IMR-90 (cell line): ENCODE measurements at regions of chr14 and their contacts with region 1.

Region 1: DNA sequence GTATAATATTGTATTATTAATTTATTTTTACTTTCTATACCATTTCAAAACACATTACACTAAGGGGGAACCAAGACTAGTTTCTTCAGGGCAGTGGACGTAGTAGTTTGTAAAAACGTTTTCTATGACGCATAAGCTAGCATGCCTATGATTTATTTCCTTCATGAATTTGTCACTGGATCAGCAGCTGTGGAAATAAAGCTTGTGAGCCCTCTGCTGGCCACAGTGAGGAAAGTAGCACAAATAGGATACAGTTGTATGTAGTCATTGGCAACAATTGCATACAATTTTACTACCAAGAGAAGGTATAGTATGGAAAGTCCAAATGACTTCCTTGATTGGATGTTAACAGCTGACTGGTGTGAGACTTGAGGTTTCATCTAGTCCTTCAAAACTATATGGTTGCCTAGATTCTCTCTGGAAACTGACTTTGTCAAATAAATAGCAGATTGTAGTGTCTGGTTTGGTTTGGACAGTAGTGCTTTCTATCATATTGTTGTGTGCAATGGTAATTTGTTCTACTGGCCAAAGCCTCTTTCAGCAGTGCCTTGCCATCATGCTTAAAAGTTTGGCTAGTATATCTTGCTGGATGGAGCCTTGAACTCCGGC is 24.3 kb upstream of the PLEKHD1 start:
- DNase-seq: peak; percentile 95
- ATAC-seq: peak; percentile 75
- H3K4me3 ChIP-seq: no peak overlapping the region
- H3K27ac ChIP-seq: no peak overlapping the region
- H3K4me1 ChIP-seq: 0 out of 2 replicates have a peak, but pooled peaks cover 2% of the 10 kb centered on the region
- H3K27me3 ChIP-seq: no peaks in the 10 kb centered on the region
- CTCF ChIP-seq: peak; percentile 86
- POLR2A ChIP-seq: no peak
- RAD21 ChIP-seq: peak; percentile 84

Region 2: DNA sequence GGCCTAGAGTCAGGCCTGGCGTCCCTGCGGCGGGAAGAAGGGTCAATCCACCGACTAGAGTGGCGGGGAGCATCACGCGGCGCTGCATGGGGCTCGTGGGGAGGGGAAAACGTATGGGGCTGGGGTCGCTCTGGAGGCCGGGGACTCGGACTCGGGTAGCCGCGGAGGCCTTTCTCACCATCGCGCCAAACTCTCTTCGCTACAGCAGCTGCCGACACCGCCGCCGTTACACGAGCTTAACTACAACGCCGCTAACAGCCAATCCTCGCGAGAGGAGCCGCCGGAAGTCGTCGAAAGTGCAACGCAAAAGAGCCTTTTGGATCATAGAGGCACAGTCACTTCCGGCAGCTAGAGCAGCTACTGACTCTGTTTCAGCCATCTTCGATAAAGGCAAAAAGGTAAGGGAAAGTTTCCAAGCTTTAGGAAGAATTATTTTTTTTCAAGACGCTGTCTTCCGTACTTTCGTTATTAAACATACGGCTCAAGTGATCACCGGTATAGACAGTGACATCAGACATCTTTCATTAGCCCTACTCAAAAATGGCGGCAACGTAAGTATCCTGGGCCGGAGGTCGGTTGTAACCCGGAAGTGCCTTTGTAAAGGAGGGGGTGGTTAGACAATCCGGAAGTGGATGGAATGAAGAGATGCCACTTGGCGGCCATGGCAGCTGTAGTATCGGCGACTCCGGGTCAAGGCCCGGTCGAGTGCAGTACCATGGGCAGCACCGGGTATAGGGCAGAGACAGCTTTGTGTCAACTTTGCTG is 62.0 kb before region 1 on chr14 and contains the starts of genes ERH and SLC39A9:
- CTCF ChIA-PET with region 1: interaction called, 3 read pairs
- POLR2A ChIA-PET with region 1: no interaction called
- dilution Hi-C with region 1: no loop called
- in situ Hi-C with region 1: no loop called
- intact Hi-C with region 1: loop called (anchors 1 kb)
- DNase-seq: peak; percentile 97
- ATAC-seq: peak; percentile 93
- H3K4me3 ChIP-seq: peak within 1 kb of the TSS; percentile 57
- H3K27ac ChIP-seq: peak within 1 kb of the TSS; percentile 94
- H3K4me1 ChIP-seq: peaks cover 1% of the 10 kb centered on the region; the same call in 1 of the 2 replicates
- H3K27me3 ChIP-seq: no peaks in the 10 kb centered on the region
- CTCF ChIP-seq: 0 out of 2 replicates have a peak, but pooled peaks have one; percentile 0
- POLR2A ChIP-seq: peak; percentile 93
- RAD21 ChIP-seq: no peak; the same call in 1 of the 2 replicates
- total RNA-seq, gene ERH: 64.2 and 189 TPM in 2 replicates
- total RNA-seq, gene SLC39A9: 137 and 168 TPM in 2 replicates

Region 3: DNA sequence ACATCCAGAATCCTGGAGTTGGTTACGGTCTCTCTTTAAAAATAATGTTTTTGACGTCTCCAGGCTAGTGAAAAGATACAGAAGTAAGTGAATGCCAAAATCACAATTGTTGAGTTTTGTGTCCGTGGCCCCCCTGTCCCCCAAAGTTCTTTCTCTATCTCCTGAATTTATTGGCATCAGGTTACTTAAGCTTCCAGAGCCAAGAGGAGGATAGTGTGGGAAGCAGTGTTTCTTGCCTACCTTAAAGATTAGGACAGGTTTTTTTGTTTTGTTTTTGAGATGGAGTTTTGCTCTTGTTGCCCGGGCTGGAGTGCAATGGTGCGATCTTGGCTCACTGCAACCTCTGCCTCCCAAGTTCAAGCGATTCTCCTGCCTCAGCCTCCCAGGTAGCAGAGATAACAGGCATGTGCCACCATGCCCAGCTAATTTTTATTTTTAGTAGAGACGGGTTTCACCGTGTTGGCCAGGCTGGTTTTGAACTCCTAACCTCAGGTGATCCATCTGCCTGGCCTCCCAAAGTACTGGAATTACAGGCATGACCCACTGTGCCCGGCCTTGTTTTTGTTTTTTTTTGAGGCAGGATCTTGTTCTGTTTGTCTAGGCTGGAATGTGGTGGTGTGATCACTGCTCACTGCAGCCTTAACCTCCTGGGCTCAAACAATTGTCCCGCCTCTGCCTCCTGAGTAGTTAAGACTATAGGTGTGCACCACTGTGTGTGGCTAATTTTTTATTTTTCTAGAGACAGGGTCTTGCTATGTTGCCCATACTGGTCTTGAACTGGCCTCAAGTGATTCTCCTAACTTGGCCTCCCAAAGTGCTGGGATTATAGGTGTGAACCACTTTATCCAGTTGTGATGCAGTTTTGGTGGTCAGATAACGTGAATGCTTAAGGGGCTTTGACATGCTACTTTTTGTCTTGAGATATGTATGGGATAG is 312.2 kb after region 1 on chr14:
- CTCF ChIA-PET with region 1: no interaction called
- POLR2A ChIA-PET with region 1: interaction called, 13 read pairs
- dilution Hi-C with region 1: no loop called
- in situ Hi-C with region 1: no loop called
- intact Hi-C with region 1: no loop called
- DNase-seq: no peak
- ATAC-seq: no peak
- H3K4me3 ChIP-seq: no peak overlapping the region
- H3K27ac ChIP-seq: no peak overlapping the region
- H3K4me1 ChIP-seq: peaks cover 4% of the 10 kb centered on the region
- H3K27me3 ChIP-seq: no peaks in the 10 kb centered on the region
- CTCF ChIP-seq: no peak
- POLR2A ChIP-seq: no peak
- RAD21 ChIP-seq: no peak